ENCODE measurements at regions of chr6 and their contacts with region 1.

Region 1: DNA sequence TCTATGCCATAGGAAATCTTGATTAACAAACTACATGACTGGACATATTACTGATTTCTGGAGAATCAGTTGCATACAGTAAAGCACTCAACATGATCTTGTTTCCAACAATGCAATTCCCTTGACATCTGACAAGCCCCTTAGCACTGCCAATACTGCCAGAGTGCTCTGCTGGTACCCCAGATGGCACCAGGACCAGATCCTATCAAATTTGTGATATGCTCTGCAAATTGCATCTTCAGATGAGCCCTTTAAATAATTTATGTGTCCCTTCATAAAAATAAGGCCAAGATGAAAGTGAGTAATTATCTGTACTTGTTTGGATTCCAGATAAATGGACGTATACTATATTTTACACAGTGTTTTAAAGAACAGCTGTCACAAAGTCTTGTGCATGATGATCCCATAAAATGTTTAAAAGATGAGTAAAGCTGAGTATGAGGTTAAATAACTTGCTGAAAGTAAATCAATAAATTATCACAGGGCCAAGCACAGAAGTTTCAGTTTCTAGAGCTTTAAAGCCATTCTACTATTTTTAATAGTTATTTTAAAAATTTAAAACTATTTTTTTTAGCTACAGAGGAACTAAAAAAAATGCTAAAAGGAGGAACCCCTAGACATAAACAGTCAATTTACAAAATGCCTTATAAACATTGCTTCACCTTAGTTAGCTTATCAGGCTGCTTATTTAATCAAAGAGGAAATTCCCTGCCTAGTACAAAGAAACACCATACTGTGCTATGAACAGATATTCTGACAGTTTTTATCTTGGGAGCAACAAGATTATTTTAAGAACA is 42.1 kb downstream of the NUDT3 start:
- DNase-seq: no peak
- ATAC-seq: no peak
- H3K4me3 ChIP-seq: no peak overlapping the region
- H3K27ac ChIP-seq: no peak overlapping the region
- H3K4me1 ChIP-seq: peaks cover 15% of the 10 kb centered on the region
- H3K27me3 ChIP-seq: no peaks in the 10 kb centered on the region
- CTCF ChIP-seq: no peak
- EP300 ChIP-seq: no peak
- POLR2A ChIP-seq: no peak
- RAD21 ChIP-seq: no peak

Region 2: GRCh38 chr6:34392497-34393190 is 42.3 kb after region 1 on chr6 and contains the start of gene NUDT3:
- CTCF ChIA-PET with region 1: interaction called, 3 read pairs
- POLR2A ChIA-PET with region 1: interaction called, 5 read pairs
- RAD21 ChIA-PET with region 1: interaction called, 3 read pairs
- SMC1A ChIA-PET with region 1: interaction called, 7 read pairs
- in situ Hi-C with region 1: no loop called
- intact Hi-C with region 1: loop called (anchors 5 kb)
- DNase-seq: peak; percentile 83
- ATAC-seq: peak; percentile 90
- H3K4me3 ChIP-seq: peak within 1 kb of the TSS; percentile 99
- H3K27ac ChIP-seq: peak within 1 kb of the TSS; percentile 75
- H3K4me1 ChIP-seq: peaks cover 3% of the 10 kb centered on the region
- H3K27me3 ChIP-seq: no peaks in the 10 kb centered on the region
- CTCF ChIP-seq: peak; percentile 90 to 93 (median 90)
- EP300 ChIP-seq: no peak
- POLR2A ChIP-seq: peak; percentile 95
- RAD21 ChIP-seq: peak; percentile 64
- polyA plus RNA-seq, gene NUDT3: 2.4 to 23.6 TPM

Region 3: GRCh38 chr6:34531580-34532201 is 181.4 kb after region 1 on chr6:
- CTCF ChIA-PET with region 1: no interaction called
- POLR2A ChIA-PET with region 1: no interaction called
- RAD21 ChIA-PET with region 1: no interaction called
- SMC1A ChIA-PET with region 1: no interaction called
- in situ Hi-C with region 1: no loop called
- intact Hi-C with region 1: no loop called
- DNase-seq: peak; percentile 17
- ATAC-seq: no peak
- H3K4me3 ChIP-seq: no peak overlapping the region
- H3K27ac ChIP-seq: no peak overlapping the region
- H3K4me1 ChIP-seq: no peaks in the 10 kb centered on the region
- H3K27me3 ChIP-seq: no peaks in the 10 kb centered on the region
- CTCF ChIP-seq: no peak
- EP300 ChIP-seq: no peak
- POLR2A ChIP-seq: no peak
- RAD21 ChIP-seq: no peak

Measured in GM12878 (cell line).